Calu3 (cell line): ENCODE measurements at regions of chr14 and their contacts with region 1.

Region 1: DNA sequence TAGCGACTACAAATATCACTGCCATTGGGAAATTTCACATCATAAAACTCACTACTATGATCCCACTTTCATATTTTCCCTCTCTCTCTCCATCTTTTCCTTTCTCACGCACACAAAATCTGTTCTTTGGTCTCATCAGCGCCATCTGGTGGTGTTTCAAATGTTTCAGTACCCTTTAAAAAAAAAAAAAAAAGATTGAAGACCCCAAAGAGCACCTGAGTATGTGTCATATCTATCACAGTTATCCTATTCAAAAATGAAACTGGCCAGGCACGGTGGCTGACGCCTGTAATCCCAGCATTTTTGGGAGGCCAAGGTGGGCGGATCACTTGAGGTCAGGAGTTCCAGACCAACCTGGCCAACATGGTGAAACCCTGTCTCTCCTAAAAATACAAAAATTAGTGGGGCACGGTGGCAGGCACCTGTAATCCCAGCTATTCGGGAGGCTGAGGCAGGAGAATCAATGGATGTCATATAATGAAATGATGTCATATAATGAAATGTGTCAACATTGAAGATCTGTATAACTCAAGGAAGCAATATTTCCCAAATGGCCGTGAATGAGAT is 72.4 kb downstream of the TTC9 start:
- DNase-seq: peak; percentile 57
- H3K4me3 Mint-ChIP-seq: no peak overlapping the region
- H3K27ac Mint-ChIP-seq: peak overlapping the region; percentile 77
- H3K4me1 Mint-ChIP-seq: peaks cover 32% of the 10 kb centered on the region
- H3K27me3 Mint-ChIP-seq: no peaks in the 10 kb centered on the region
- CTCF ChIP-seq: peak; percentile 49

Region 2: GRCh38 chr14:70622111-70622712 is 91.9 kb before region 1 on chr14:
- CTCF ChIA-PET with region 1: interaction called, 4 read pairs
- intact Hi-C with region 1: loop called (anchors 1 kb)
- DNase-seq: peak; percentile 67
- H3K4me3 Mint-ChIP-seq: no peak overlapping the region
- H3K27ac Mint-ChIP-seq: peak overlapping the region; percentile 58
- H3K4me1 Mint-ChIP-seq: peaks cover 38% of the 10 kb centered on the region
- H3K27me3 Mint-ChIP-seq: no peaks in the 10 kb centered on the region
- CTCF ChIP-seq: peak; percentile 70

Region 3: GRCh38 chr14:70640938-70641547 is 73.1 kb before region 1 on chr14:
- CTCF ChIA-PET with region 1: interaction called, 11 read pairs
- intact Hi-C with region 1: loop called (anchors 5 kb)
- DNase-seq: peak; percentile 40
- H3K4me3 Mint-ChIP-seq: peak overlapping the region; percentile 95
- H3K27ac Mint-ChIP-seq: peak overlapping the region; percentile 37
- H3K4me1 Mint-ChIP-seq: peaks cover 25% of the 10 kb centered on the region
- H3K27me3 Mint-ChIP-seq: no peaks in the 10 kb centered on the region
- CTCF ChIP-seq: no peak

Region 4: GRCh38 chr14:70816525-70816924 is 102.4 kb after region 1 on chr14:
- CTCF ChIA-PET with region 1: no interaction called
- intact Hi-C with region 1: loop called (anchors 5 kb)
- DNase-seq: no peak
- H3K4me3 Mint-ChIP-seq: no peak overlapping the region
- H3K27ac Mint-ChIP-seq: no peak overlapping the region
- H3K4me1 Mint-ChIP-seq: no peaks in the 10 kb centered on the region
- H3K27me3 Mint-ChIP-seq: no peaks in the 10 kb centered on the region
- CTCF ChIP-seq: no peak

Region 5: GRCh38 chr14:70897464-70897863 is 183.3 kb after region 1 on chr14:
- CTCF ChIA-PET with region 1: no interaction called
- intact Hi-C with region 1: no loop called
- DNase-seq: no peak
- H3K4me3 Mint-ChIP-seq: no peak overlapping the region
- H3K27ac Mint-ChIP-seq: no peak overlapping the region
- H3K4me1 Mint-ChIP-seq: peaks cover 13% of the 10 kb centered on the region
- H3K27me3 Mint-ChIP-seq: peaks cover 15% of the 10 kb centered on the region
- CTCF ChIP-seq: no peak